Esophagus muscularis mucosa (tissue), 4 donors: ENCODE measurements at regions of chr1 and their contacts with region 1.

Region 1: DNA sequence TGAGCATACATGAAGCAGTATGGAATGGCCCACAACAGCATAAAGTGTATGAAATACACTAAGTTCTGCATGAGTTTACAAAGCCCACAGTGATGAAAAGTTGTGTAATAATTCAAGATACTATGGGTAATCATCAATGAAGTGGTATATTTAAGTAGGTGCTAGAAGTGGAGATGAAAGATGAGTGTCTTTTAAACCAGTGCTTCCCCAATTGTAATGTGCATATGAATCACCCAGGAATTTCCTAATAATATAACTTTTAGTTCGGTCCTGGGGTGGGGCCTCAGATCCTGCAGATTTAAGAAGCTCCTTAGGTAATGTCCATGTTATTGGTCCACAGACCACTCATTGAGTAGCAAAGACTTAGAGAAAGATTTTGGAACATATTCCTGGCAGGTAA is 184.9 kb downstream of the DUSP10 start:
- DNase-seq: no peak
- H3K4me3 ChIP-seq: no peak overlapping the region
- H3K27ac ChIP-seq: no peak overlapping the region
- H3K4me1 ChIP-seq: no peaks in the 10 kb centered on the region
- H3K27me3 ChIP-seq: no peaks in the 10 kb centered on the region
- CTCF ChIP-seq: no peak
- EP300 ChIP-seq: no peak
- POLR2A ChIP-seq: no peak

Region 2: DNA sequence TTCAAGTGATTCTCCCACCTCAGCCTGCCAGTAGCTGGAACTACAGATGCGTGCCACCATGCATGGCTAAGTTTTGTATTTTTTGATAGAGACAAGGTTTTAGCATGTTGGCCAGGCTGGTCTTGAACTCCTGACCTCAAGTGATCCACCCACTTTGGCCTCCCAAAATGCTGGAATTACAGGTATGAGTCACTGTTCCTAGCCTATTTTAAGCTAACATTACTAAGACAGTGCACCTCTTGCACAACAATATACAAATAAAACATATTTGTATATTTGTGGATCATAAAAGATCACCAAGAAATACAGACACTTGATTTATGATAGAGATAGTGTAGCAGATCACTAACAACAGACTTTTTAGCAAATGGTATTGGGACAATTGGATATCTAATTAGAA is 45.9 kb after region 1 on chr1:
- intact Hi-C with region 1: no loop called
- DNase-seq: no peak
- H3K4me3 ChIP-seq: no peak overlapping the region
- H3K27ac ChIP-seq: no peak overlapping the region
- H3K4me1 ChIP-seq: no peaks in the 10 kb centered on the region
- H3K27me3 ChIP-seq: no peaks in the 10 kb centered on the region
- CTCF ChIP-seq: no peak
- EP300 ChIP-seq: no peak
- POLR2A ChIP-seq: no peak

Region 3: GRCh38 chr1:221693087-221693486 is 136.1 kb after region 1 on chr1:
- intact Hi-C with region 1: loop called (anchors 10 kb)
- DNase-seq: no peak
- H3K4me3 ChIP-seq: no peak overlapping the region
- H3K27ac ChIP-seq: no peak overlapping the region
- H3K4me1 ChIP-seq: peaks cover 0 to 14% (median 9%) of the 10 kb centered on the region in 4 donors
- H3K27me3 ChIP-seq: no peaks in the 10 kb centered on the region
- CTCF ChIP-seq: no peak
- EP300 ChIP-seq: no peak
- POLR2A ChIP-seq: no peak